Ovary (tissue), 10 donors: ENCODE measurements at regions of chr22 and their contacts with region 1.

Region 1: GRCh38 chr22:24730864-24731263 is 43.7 kb downstream of the PIWIL3 start:
- DNase-seq: no peak
- H3K4me3 ChIP-seq: no peak overlapping the region
- H3K27ac ChIP-seq: no peak overlapping the region
- H3K4me1 ChIP-seq: peaks cover 7% of the 10 kb centered on the region
- H3K27me3 ChIP-seq: no peaks in the 10 kb centered on the region
- CTCF ChIP-seq: no peak
- EP300 ChIP-seq: no peak
- POLR2A ChIP-seq: no peak

Region 2: GRCh38 chr22:24542641-24543040 is 188.2 kb before region 1 on chr22:
- intact Hi-C with region 1: no loop called
- DNase-seq: no peak
- H3K4me3 ChIP-seq: no peak overlapping the region
- H3K27ac ChIP-seq: no peak overlapping the region
- H3K4me1 ChIP-seq: peaks cover 3% of the 10 kb centered on the region
- H3K27me3 ChIP-seq: no peaks in the 10 kb centered on the region
- CTCF ChIP-seq: no peak
- EP300 ChIP-seq: no peak
- POLR2A ChIP-seq: no peak

Region 3: GRCh38 chr22:24685531-24686190 is 45.2 kb before region 1 on chr22:
- intact Hi-C with region 1: no loop called
- DNase-seq: peak in 2 of 5 donors; percentile 43 to 66
- H3K4me3 ChIP-seq: no peak overlapping the region
- H3K27ac ChIP-seq: no peak overlapping the region
- H3K4me1 ChIP-seq: no peaks in the 10 kb centered on the region
- H3K27me3 ChIP-seq: no peaks in the 10 kb centered on the region
- CTCF ChIP-seq: no peak
- EP300 ChIP-seq: no peak
- POLR2A ChIP-seq: no peak

Region 4: DNA sequence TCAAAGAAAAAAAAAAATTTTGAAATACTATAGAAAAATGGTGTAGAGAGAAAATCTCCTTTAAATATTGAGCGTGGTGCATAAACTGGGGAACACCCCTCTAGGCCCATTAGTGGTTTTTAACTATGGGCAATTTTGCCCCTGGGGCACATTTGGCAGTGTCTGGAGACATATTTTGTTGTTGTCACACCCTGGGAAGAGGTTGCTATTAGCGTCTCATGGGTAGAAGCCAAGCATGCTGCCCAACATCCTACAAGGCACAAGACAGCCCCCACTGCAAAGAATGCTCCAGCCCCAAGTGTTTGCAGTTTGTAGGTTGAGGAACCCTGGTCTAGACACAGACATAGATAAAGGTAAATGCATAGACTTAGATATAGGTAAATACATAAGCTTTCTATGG is 314.3 kb after region 1 on chr22:
- intact Hi-C with region 1: no loop called
- DNase-seq: no peak
- H3K4me3 ChIP-seq: no peak overlapping the region
- H3K27ac ChIP-seq: no peak overlapping the region
- H3K4me1 ChIP-seq: peaks cover 1% of the 10 kb centered on the region
- H3K27me3 ChIP-seq: no peaks in the 10 kb centered on the region
- CTCF ChIP-seq: no peak
- EP300 ChIP-seq: no peak
- POLR2A ChIP-seq: no peak

Region 5: DNA sequence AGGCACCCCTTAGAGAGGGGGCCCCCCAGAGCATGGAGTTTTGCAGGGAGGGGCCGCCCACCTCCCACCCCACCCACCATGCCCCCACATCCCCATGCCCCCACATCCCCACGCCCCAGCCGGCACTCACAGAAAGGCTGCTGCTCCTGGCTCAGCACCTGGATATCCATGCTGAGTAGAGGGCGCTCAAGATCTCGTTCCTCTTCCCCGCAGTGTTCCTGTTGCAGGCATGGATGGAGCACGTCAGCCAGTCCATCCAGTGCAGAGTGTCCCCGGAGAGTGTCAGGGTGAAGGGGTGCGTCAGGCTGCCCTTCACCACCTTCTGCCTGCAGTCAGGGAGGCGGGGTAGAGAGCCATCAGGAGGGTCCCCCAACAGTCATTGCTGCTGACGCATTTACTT is 644.8 kb after region 1 on chr22:
- intact Hi-C with region 1: loop called in 1 of 4 experiments (anchors 5 kb)
- DNase-seq: no peak
- H3K4me3 ChIP-seq: no peak overlapping the region
- H3K27ac ChIP-seq: no peak overlapping the region
- H3K4me1 ChIP-seq: no peaks in the 10 kb centered on the region
- H3K27me3 ChIP-seq: no peaks in the 10 kb centered on the region
- CTCF ChIP-seq: no peak
- EP300 ChIP-seq: no peak
- POLR2A ChIP-seq: no peak